CD4-positive, alpha-beta memory T cell (primary cell): ENCODE measurements at regions of chr7 and their contacts with region 1.

Region 1: GRCh38 chr7:36291387-36292316 is 98.0 kb upstream of the ANLN start:
- DNase-seq: peak; percentile 56 to 70 (median 62)
- H3K4me3 ChIP-seq: no peak overlapping the region
- H3K4me3 Mint-ChIP-seq: peak overlapping the region; percentile 55 to 83 (median 68)
- H3K27ac ChIP-seq: no peak overlapping the region
- H3K27ac Mint-ChIP-seq: peak overlapping the region in 6 of 7 donors; percentile 52 to 89 (median 80)
- H3K4me1 ChIP-seq: peaks cover 50% of the 10 kb centered on the region
- H3K4me1 Mint-ChIP-seq: peaks cover 36 to 61% (median 49%) of the 10 kb centered on the region in 4 donors
- H3K27me3 ChIP-seq: no peaks in the 10 kb centered on the region
- H3K27me3 Mint-ChIP-seq: no peaks in the 10 kb centered on the region

Region 2: GRCh38 chr7:35694781-35695472 is 596.7 kb before region 1 on chr7 and contains the start of gene HERPUD2:
- CTCF ChIA-PET with region 1: interaction called, 3 read pairs
- POLR2A ChIA-PET with region 1: interaction called, 3 read pairs
- intact Hi-C with region 1: loop called (anchors 2 kb)
- DNase-seq: peak; percentile 91 to 94 (median 93)
- H3K4me3 ChIP-seq: peak within 1 kb of the TSS; percentile 90 to 98
- H3K4me3 Mint-ChIP-seq: peak within 1 kb of the TSS; percentile 94 to 99 (median 98)
- H3K27ac ChIP-seq: peak within 1 kb of the TSS; percentile 93
- H3K27ac Mint-ChIP-seq: peak within 1 kb of the TSS; percentile 86 to 100 (median 98)
- H3K4me1 ChIP-seq: peaks cover 33% of the 10 kb centered on the region
- H3K4me1 Mint-ChIP-seq: peaks cover 23 to 67% (median 39%) of the 10 kb centered on the region in 4 donors
- H3K27me3 ChIP-seq: no peaks in the 10 kb centered on the region
- H3K27me3 Mint-ChIP-seq: no peaks in the 10 kb centered on the region
- total RNA-seq, gene HERPUD2: 67.3 to 71.8 TPM

Region 3: GRCh38 chr7:35985126-35985754 is 306.4 kb before region 1 on chr7:
- CTCF ChIA-PET with region 1: interaction called, 225 read pairs
- POLR2A ChIA-PET with region 1: interaction called, 12 read pairs
- intact Hi-C with region 1: loop called (anchors 1 kb)
- DNase-seq: peak; percentile 74 to 81 (median 76)
- H3K4me3 ChIP-seq: no peak overlapping the region
- H3K4me3 Mint-ChIP-seq: no peak overlapping the region
- H3K27ac ChIP-seq: no peak overlapping the region
- H3K27ac Mint-ChIP-seq: peak overlapping the region in 2 of 7 donors; percentile 52 to 80
- H3K4me1 ChIP-seq: no peaks in the 10 kb centered on the region
- H3K4me1 Mint-ChIP-seq: peaks cover 0 to 5% (median 2%) of the 10 kb centered on the region in 4 donors
- H3K27me3 ChIP-seq: no peaks in the 10 kb centered on the region
- H3K27me3 Mint-ChIP-seq: peaks cover 2 to 3% of the 10 kb centered on the region in 2 donors

Region 4: DNA sequence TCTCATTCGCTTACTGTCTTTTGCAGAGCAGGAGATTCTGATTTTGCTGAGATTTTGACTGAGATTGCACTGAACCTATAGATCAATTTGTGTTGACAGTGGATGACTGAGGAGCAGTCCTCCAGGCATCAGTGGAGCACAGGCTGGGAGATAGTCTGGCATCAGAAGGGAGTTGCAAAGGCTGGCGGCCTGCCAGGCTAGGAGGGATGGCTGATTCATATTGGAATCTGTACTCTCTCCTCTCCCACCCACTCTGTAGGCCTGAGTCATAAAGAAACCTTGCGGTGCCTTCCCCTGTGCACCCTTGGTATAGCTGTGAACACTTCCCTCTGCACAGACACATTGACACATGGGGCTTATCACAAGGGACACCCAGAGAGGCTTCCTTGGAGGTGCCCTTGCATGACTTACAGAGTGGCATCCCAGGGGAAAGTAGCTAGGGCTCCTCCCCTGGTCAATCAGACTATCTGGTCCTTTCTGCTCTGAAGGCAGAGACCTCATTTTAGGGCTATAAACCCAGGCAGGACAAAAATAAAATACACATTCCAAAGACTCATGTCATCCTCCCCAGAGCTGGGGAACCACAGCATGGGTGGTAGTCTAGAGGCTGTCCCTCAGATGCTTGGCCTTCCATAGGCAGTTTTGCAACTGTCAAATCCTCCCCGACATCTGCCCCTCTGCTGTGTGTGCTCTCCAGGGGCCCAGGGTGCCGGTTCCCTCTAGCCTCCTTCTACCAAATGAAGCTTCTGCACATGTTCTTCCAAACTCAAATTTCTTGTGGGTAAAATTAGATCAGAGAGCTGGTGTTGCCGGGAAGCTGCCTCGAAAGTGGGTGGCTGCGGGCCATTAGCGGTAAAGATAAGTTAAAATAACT is 176.0 kb before region 1 on chr7:
- CTCF ChIA-PET with region 1: interaction called, 11 read pairs
- POLR2A ChIA-PET with region 1: interaction called, 12 read pairs
- intact Hi-C with region 1: no loop called
- DNase-seq: peak in 1 of 5 donors; percentile 59
- H3K4me3 ChIP-seq: no peak overlapping the region
- H3K4me3 Mint-ChIP-seq: peak overlapping the region in 7 of 8 donors; percentile 53 to 85 (median 73)
- H3K27ac ChIP-seq: peak overlapping the region; percentile 17
- H3K27ac Mint-ChIP-seq: peak overlapping the region; percentile 28 to 95 (median 90)
- H3K4me1 ChIP-seq: peaks cover 49% of the 10 kb centered on the region
- H3K4me1 Mint-ChIP-seq: peaks cover 37 to 53% (median 44%) of the 10 kb centered on the region in 4 donors
- H3K27me3 ChIP-seq: no peaks in the 10 kb centered on the region
- H3K27me3 Mint-ChIP-seq: no peaks in the 10 kb centered on the region

Region 5: DNA sequence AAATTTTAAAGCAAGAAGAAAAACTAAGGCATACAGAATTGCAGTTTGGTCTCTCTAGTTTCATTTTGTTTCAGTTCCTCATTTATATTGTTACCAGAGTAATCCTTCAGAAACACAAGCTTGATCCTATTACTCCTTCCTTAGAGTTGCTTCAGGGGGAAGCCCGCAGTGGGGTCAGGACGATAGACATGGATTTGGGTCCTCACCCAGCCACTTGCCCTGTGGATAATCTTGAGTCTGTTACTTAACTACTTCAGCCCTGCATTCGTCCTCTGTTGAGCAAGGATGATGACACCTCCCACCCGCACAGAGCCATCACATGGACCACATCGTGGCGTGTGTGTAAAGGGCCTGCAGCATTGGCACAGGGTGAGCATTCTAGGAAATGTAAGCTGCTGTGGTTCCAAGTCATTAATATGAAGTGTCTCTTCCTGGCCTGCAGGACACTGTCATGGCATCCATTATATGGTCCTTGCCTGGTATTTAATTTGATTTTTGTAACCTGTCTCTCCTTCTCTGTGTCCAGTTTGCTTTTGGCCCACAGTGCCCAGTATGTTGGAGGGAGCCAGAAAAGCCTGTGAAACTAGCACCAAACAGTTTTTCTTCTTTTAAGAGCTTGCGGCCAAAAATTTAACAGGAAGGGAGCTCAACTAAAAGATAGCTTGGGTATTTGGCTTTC is 27.4 kb before region 1 on chr7:
- CTCF ChIA-PET with region 1: interaction called, 3 read pairs
- POLR2A ChIA-PET with region 1: interaction called, 20 read pairs
- intact Hi-C with region 1: no loop called
- DNase-seq: no peak
- H3K4me3 ChIP-seq: no peak overlapping the region
- H3K4me3 Mint-ChIP-seq: no peak overlapping the region
- H3K27ac ChIP-seq: no peak overlapping the region
- H3K27ac Mint-ChIP-seq: peak overlapping the region in 1 of 7 donors; percentile 58
- H3K4me1 ChIP-seq: peaks cover 14% of the 10 kb centered on the region
- H3K4me1 Mint-ChIP-seq: peaks cover 18 to 37% (median 24%) of the 10 kb centered on the region in 4 donors
- H3K27me3 ChIP-seq: no peaks in the 10 kb centered on the region
- H3K27me3 Mint-ChIP-seq: no peaks in the 10 kb centered on the region

Region 6: DNA sequence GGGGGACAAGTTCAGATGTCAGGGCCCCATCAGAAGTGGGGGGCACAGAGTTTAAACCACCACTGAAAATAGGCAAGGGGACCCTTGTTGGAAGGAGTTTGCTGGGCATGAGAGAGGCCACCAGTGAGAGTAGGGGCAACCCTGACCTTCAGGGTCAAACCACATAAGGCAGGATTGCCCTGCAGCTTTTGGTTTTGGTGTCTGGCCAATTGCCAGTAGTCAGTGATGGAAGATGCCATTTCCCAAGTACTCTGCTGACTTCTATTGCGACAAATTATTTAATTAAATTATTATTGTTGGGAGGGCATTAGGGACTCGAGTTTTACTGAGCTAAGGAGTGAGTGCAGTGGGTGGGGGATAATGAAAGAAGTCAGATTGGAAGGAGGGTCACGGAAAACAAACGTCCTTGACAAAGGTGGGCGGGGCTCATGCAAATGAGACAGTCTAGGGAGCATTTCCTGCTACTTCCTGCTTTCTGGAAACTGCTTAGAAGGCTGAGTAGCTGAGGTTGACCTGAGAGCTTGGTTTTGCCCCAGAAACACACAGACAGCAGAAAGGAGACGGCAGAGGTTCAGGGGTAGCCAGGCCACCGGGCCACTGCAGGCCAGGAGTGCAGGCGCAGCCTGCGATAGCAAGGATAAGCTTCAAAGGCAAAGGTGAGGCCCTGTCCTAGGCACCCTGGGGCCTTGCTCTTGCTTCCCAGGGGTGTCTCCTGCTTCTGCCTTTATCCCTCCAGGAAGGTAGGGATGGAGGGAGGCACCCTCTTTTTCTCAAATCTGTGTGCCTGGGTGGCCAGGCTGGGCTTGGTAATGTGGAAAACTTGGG is 23.9 kb after region 1 on chr7:
- CTCF ChIA-PET with region 1: interaction called, 18 read pairs
- POLR2A ChIA-PET with region 1: interaction called, 3 read pairs
- intact Hi-C with region 1: loop called (anchors 1 kb)
- DNase-seq: no peak
- H3K4me3 ChIP-seq: no peak overlapping the region
- H3K4me3 Mint-ChIP-seq: no peak overlapping the region
- H3K27ac ChIP-seq: no peak overlapping the region
- H3K27ac Mint-ChIP-seq: no peak overlapping the region
- H3K4me1 ChIP-seq: peaks cover 3% of the 10 kb centered on the region
- H3K4me1 Mint-ChIP-seq: peaks cover 2 to 6% (median 5%) of the 10 kb centered on the region in 4 donors
- H3K27me3 ChIP-seq: no peaks in the 10 kb centered on the region
- H3K27me3 Mint-ChIP-seq: no peaks in the 10 kb centered on the region

Region 7: GRCh38 chr7:36391436-36392198 is 100.0 kb after region 1 on chr7:
- CTCF ChIA-PET with region 1: no interaction called
- POLR2A ChIA-PET with region 1: no interaction called
- intact Hi-C with region 1: no loop called
- DNase-seq: peak in 1 of 5 donors; percentile 24
- H3K4me3 ChIP-seq: no peak overlapping the region
- H3K4me3 Mint-ChIP-seq: peak overlapping the region in 7 of 8 donors; percentile 8 to 91 (median 66)
- H3K27ac ChIP-seq: no peak overlapping the region
- H3K27ac Mint-ChIP-seq: peak overlapping the region in 2 of 7 donors; percentile 2 to 43
- H3K4me1 ChIP-seq: peaks cover 16% of the 10 kb centered on the region
- H3K4me1 Mint-ChIP-seq: peaks cover 15 to 28% (median 21%) of the 10 kb centered on the region in 4 donors
- H3K27me3 ChIP-seq: no peaks in the 10 kb centered on the region
- H3K27me3 Mint-ChIP-seq: peaks cover 0 to 1% of the 10 kb centered on the region in 2 donors